ENCODE measurements at regions of chr20 and their contacts with region 1.

Region 1: DNA sequence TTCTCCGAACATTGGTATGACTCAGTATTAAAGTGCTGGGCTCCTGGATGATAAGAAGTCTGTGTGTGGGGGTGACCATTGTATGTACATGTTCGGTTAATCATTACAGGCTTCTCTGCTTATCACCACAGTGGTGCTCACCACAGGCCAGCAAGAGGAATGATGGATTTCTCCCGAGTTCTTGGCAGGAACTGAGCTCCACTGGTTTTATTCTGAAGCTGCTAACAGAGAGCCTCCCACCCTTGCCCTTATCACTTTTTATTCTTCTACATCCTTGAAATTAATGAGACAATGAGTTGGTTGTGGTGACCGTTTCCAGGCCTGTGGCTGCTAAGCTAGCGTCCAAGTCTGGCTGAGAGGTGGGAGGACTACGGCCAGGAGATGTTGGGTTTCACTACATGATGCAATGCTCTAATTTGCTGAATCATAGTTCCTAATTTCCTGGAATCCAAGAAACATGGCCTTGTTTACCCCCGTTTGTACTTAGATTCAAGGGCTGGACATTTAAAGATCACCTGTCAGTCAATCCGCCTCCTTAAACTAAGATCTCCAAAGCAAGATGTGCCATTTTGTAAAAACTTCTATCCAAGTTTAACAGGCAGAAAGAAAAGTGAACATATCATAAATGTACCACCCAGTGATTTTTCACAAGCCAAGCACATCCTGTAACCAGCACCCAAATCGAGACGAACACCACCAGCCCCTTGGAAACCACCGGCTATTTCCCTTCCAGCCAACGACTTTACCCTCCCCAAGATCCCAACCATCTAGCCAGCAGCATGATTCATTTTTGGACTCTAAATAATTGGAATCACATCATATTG is 172.5 kb downstream of the FOXA2 start:
- DNase-seq: peak; percentile 75 to 79
- H3K4me3 ChIP-seq: no peak overlapping the region
- H3K4me3 Mint-ChIP-seq: peak overlapping the region; percentile 42
- H3K27ac Mint-ChIP-seq: peak overlapping the region; percentile 96
- H3K4me1 ChIP-seq: peaks cover 52% of the 10 kb centered on the region
- H3K4me1 Mint-ChIP-seq: peaks cover 55% of the 10 kb centered on the region
- H3K27me3 ChIP-seq: no peaks in the 10 kb centered on the region
- H3K27me3 Mint-ChIP-seq: no peaks in the 10 kb centered on the region
- CTCF ChIP-seq: no peak

Region 2: GRCh38 chr20:22368235-22368634 is 43.6 kb before region 1 on chr20:
- CTCF ChIA-PET with region 1: no interaction called
- POLR2A ChIA-PET with region 1: no interaction called
- intact Hi-C with region 1: no loop called
- DNase-seq: no peak
- H3K4me3 ChIP-seq: no peak overlapping the region
- H3K4me3 Mint-ChIP-seq: no peak overlapping the region
- H3K27ac Mint-ChIP-seq: no peak overlapping the region
- H3K4me1 ChIP-seq: no peaks in the 10 kb centered on the region
- H3K4me1 Mint-ChIP-seq: no peaks in the 10 kb centered on the region
- H3K27me3 ChIP-seq: peaks cover 1% of the 10 kb centered on the region; the same call in 1 of the 2 replicates
- H3K27me3 Mint-ChIP-seq: peaks cover 2% of the 10 kb centered on the region
- CTCF ChIP-seq: no peak

Region 3: GRCh38 chr20:22425344-22426295 is 13.8 kb after region 1 on chr20:
- CTCF ChIA-PET with region 1: no interaction called
- POLR2A ChIA-PET with region 1: no interaction called
- intact Hi-C with region 1: loop called (anchors 2 kb)
- DNase-seq: peak in 1 of 2 experiments; percentile 38
- H3K4me3 ChIP-seq: no peak overlapping the region
- H3K4me3 Mint-ChIP-seq: no peak overlapping the region
- H3K27ac Mint-ChIP-seq: peak overlapping the region; percentile 27
- H3K4me1 ChIP-seq: peaks cover 20% of the 10 kb centered on the region
- H3K4me1 Mint-ChIP-seq: peaks cover 21% of the 10 kb centered on the region
- H3K27me3 ChIP-seq: no peaks in the 10 kb centered on the region
- H3K27me3 Mint-ChIP-seq: no peaks in the 10 kb centered on the region
- CTCF ChIP-seq: no peak

Measured in Caco-2 (cell line).